Posterior vena cava (tissue), 2 donors: ENCODE measurements at regions of chrX and their contacts with region 1.

Region 1: GRCh38 chrX:130810561-130810960 is 92.4 kb downstream of the ENOX2 start:
- DNase-seq: no peak

Region 2: GRCh38 chrX:130125091-130125874 is 685.3 kb before region 1 on chrX:
- intact Hi-C with region 1: no loop called
- DNase-seq: peak; percentile 89

Region 3: DNA sequence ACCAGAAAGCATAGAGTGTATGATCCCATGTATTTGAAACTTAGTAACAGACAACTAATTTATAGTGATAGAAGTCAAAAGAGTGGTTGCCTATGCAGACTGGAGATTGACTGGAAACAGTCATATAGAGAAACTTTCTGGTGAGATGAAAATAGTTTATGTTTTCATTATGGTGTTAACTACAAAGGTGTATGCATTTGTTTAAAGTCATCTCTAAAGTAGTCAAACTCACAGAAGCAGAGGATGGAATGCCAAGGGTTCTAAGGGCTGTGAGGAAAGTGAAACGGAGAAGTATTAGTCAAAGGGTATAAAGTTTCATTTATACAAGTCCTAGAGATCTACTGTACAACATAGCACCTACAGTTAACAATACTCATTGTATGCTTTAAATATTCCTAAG is 46.6 kb after region 1 on chrX:
- intact Hi-C with region 1: loop called in 1 of 2 experiments (anchors 5 kb)
- DNase-seq: no peak